ENCODE measurements at regions of chr2 and their contacts with region 1.

Region 1: GRCh38 chr2:121596221-121597080 is 52.8 kb downstream of the CLASP1 start:
- DNase-seq: peak; percentile 35 to 49
- H3K4me3 ChIP-seq: no peak overlapping the region
- H3K27ac ChIP-seq: 0 out of 2 replicates have a peak overlapping the region, but pooled peaks have one; percentile 13
- H3K4me1 ChIP-seq: 0 out of 2 replicates have a peak, but pooled peaks cover 3% of the 10 kb centered on the region
- H3K27me3 ChIP-seq: no peaks in the 10 kb centered on the region
- CTCF ChIP-seq: peak; percentile 71

Region 2: GRCh38 chr2:121617042-121617599 is 20.7 kb after region 1 on chr2:
- CTCF ChIA-PET with region 1: no interaction called
- POLR2A ChIA-PET with region 1: no interaction called
- intact Hi-C with region 1: no loop called
- DNase-seq: no peak
- H3K4me3 ChIP-seq: no peak overlapping the region
- H3K27ac ChIP-seq: no peak overlapping the region
- H3K4me1 ChIP-seq: no peaks in the 10 kb centered on the region
- H3K27me3 ChIP-seq: no peaks in the 10 kb centered on the region
- CTCF ChIP-seq: no peak

Region 3: DNA sequence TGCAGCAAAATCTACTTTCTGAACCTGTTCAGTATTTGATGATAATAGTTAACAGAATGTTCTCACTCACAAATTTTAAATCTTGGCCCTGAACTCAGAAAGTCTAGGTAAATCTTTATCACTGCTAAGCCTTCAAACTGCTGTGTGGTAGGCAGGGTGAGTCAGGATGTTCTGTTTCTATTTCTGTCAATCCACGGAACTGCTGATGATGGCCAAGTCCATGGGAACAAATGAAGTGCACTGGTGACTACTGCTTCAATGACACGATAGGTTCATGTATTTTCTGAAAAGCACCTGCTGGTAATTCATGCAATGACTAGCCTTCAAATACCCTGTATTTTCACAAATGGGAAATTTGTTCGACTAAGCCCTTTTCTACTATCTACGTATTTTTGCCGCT is 126.0 kb after region 1 on chr2:
- CTCF ChIA-PET with region 1: interaction called, 6 read pairs
- POLR2A ChIA-PET with region 1: no interaction called
- intact Hi-C with region 1: loop called (anchors 1 kb)
- DNase-seq: peak in 1 of 2 experiments; percentile 70
- H3K4me3 ChIP-seq: no peak overlapping the region
- H3K27ac ChIP-seq: peak overlapping the region; percentile 42
- H3K4me1 ChIP-seq: peaks cover 13% of the 10 kb centered on the region; the same call in 1 of the 2 replicates
- H3K27me3 ChIP-seq: no peaks in the 10 kb centered on the region
- CTCF ChIP-seq: no peak